ENCODE measurements at regions of chr9 and their contacts with region 1.

Region 1: DNA sequence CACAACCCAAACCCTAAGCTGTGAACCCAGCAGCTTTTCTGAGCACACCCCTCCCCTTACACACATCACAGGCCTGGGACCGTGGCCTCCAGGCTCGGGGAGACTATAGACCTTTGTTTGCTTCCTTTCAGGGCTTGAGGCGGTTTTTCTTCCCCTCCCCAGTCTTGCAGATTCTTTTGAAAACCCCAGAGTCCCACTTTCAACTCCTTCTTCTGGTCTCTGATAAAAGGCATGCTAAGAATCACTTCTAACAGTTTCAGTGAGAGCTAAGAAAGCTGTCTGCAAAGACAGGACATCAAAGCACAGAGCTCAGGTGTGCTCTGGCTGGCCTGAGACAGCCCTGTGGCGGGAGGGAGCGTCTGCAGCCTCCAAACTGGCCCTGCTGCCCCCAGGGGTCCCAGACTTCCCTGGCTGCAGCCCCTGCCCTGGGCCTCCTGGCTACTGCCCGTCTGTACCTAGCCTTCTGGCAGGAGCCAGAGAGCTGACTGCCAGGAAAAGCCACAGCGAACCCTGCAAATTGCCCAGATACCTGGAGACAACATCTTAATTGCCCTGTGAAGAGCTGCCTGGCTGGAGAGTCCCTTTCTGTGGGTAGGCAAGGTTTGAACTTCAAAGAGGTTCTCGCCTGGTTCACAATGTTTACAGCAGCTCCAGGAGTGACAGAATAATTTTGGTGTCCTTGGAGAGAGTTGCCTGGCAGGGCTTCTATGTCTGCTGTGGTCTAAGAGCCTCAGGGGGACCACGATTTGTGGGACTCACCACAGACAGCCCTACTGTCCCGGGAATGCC is 139.0 kb downstream of the GADD45G start:
- DNase-seq: peak; percentile 71
- ATAC-seq: peak; percentile 73
- H3K4me3 ChIP-seq: no peak overlapping the region
- H3K27ac ChIP-seq: peak overlapping the region; percentile 58
- H3K4me1 ChIP-seq: peaks cover 48% of the 10 kb centered on the region
- H3K27me3 ChIP-seq: no peaks in the 10 kb centered on the region; a peak in 1 of 4 replicates
- CTCF ChIP-seq: 0 out of 6 replicates have a peak, but pooled peaks of 2 of the 3 experiments have one; percentile 11 to 12
- EP300 ChIP-seq: 0 out of 4 replicates have a peak, but pooled peaks of 1 of the 2 experiments have one; percentile 10
- POLR2A ChIP-seq: no peak
- RAD21 ChIP-seq: 0 out of 2 replicates have a peak, but pooled peaks have one; percentile 2

Region 2: GRCh38 chr9:89690334-89690912 is 53.3 kb before region 1 on chr9:
- CTCF ChIA-PET with region 1: no interaction called
- POLR2A ChIA-PET with region 1: no interaction called
- RAD21 ChIA-PET with region 1: interaction called, 13 read pairs
- SMC1A ChIA-PET with region 1: interaction called, 4 read pairs
- in situ Hi-C with region 1: no loop called
- intact Hi-C with region 1: no loop called
- DNase-seq: peak; percentile 64
- ATAC-seq: peak; percentile 96
- H3K4me3 ChIP-seq: no peak overlapping the region
- H3K27ac ChIP-seq: no peak overlapping the region
- H3K4me1 ChIP-seq: peaks cover 17% of the 10 kb centered on the region
- H3K27me3 ChIP-seq: peaks cover 0 to 4% of the 10 kb centered on the region in 2 experiments; a peak in 2 of 4 replicates
- CTCF ChIP-seq: no peak
- EP300 ChIP-seq: peak; percentile 81 to 92; a peak in 3 of 4 replicates
- POLR2A ChIP-seq: no peak
- RAD21 ChIP-seq: no peak

Region 3: GRCh38 chr9:89714321-89714720 is 29.4 kb before region 1 on chr9:
- CTCF ChIA-PET with region 1: interaction called, 4 read pairs
- POLR2A ChIA-PET with region 1: no interaction called
- RAD21 ChIA-PET with region 1: interaction called, 10 read pairs
- SMC1A ChIA-PET with region 1: interaction called, 6 read pairs
- in situ Hi-C with region 1: no loop called
- intact Hi-C with region 1: no loop called
- DNase-seq: no peak
- ATAC-seq: no peak
- H3K4me3 ChIP-seq: no peak overlapping the region
- H3K27ac ChIP-seq: no peak overlapping the region
- H3K4me1 ChIP-seq: peaks cover 11% of the 10 kb centered on the region; the same call in 1 of the 2 replicates
- H3K27me3 ChIP-seq: no peaks in the 10 kb centered on the region
- CTCF ChIP-seq: no peak
- EP300 ChIP-seq: no peak
- POLR2A ChIP-seq: no peak
- RAD21 ChIP-seq: no peak

Region 4: GRCh38 chr9:89781838-89782517 is 38.2 kb after region 1 on chr9:
- CTCF ChIA-PET with region 1: no interaction called
- POLR2A ChIA-PET with region 1: no interaction called
- RAD21 ChIA-PET with region 1: interaction called, 3 read pairs
- SMC1A ChIA-PET with region 1: interaction called, 13 read pairs
- in situ Hi-C with region 1: no loop called
- intact Hi-C with region 1: no loop called
- DNase-seq: peak; percentile 72
- ATAC-seq: peak; percentile 96
- H3K4me3 ChIP-seq: no peak overlapping the region
- H3K27ac ChIP-seq: no peak overlapping the region
- H3K4me1 ChIP-seq: no peaks in the 10 kb centered on the region; the same call in 1 of the 2 replicates
- H3K27me3 ChIP-seq: no peaks in the 10 kb centered on the region
- CTCF ChIP-seq: no peak
- EP300 ChIP-seq: no peak
- POLR2A ChIP-seq: no peak
- RAD21 ChIP-seq: no peak

Region 5: GRCh38 chr9:89797937-89798491 is 54.2 kb after region 1 on chr9:
- CTCF ChIA-PET with region 1: no interaction called
- POLR2A ChIA-PET with region 1: no interaction called
- RAD21 ChIA-PET with region 1: no interaction called
- SMC1A ChIA-PET with region 1: no interaction called
- in situ Hi-C with region 1: no loop called
- intact Hi-C with region 1: no loop called
- DNase-seq: no peak
- ATAC-seq: no peak
- H3K4me3 ChIP-seq: no peak overlapping the region
- H3K27ac ChIP-seq: no peak overlapping the region
- H3K4me1 ChIP-seq: no peaks in the 10 kb centered on the region
- H3K27me3 ChIP-seq: 0 out of 4 replicates have a peak, but pooled peaks cover 0 to 3% of the 10 kb centered on the region in 2 experiments
- CTCF ChIP-seq: no peak
- EP300 ChIP-seq: no peak
- POLR2A ChIP-seq: no peak
- RAD21 ChIP-seq: no peak

Region 6: DNA sequence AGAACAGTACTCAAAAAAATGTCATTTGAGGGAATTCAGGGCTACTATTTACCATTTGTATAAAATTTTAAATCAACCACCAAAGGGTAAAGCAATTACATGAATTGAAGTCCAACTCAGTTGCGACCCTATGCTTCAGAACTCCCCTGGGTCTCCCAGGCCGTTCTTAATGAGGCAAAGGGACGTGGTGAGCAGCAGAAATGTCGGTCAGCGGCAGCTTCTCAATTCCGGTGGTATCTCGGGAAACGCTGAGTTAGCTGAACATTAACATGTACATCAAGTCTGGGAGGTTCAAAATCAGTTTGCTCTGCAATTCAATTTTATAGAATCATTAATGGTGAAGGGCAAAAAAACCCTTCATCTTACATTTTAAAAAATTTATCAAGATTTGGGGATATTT is 725.7 kb after region 1 on chr9:
- CTCF ChIA-PET with region 1: no interaction called
- POLR2A ChIA-PET with region 1: no interaction called
- RAD21 ChIA-PET with region 1: no interaction called
- SMC1A ChIA-PET with region 1: no interaction called
- in situ Hi-C with region 1: no loop called
- intact Hi-C with region 1: no loop called
- DNase-seq: no peak
- ATAC-seq: no peak
- H3K4me3 ChIP-seq: no peak overlapping the region
- H3K27ac ChIP-seq: no peak overlapping the region
- H3K4me1 ChIP-seq: no peaks in the 10 kb centered on the region
- H3K27me3 ChIP-seq: no peaks in the 10 kb centered on the region; a peak in 1 of 4 replicates
- CTCF ChIP-seq: no peak
- EP300 ChIP-seq: no peak
- POLR2A ChIP-seq: no peak
- RAD21 ChIP-seq: no peak

Measured in GM12878 (cell line).